ENCODE measurements at regions of chr14 and their contacts with region 1.

Region 1: DNA sequence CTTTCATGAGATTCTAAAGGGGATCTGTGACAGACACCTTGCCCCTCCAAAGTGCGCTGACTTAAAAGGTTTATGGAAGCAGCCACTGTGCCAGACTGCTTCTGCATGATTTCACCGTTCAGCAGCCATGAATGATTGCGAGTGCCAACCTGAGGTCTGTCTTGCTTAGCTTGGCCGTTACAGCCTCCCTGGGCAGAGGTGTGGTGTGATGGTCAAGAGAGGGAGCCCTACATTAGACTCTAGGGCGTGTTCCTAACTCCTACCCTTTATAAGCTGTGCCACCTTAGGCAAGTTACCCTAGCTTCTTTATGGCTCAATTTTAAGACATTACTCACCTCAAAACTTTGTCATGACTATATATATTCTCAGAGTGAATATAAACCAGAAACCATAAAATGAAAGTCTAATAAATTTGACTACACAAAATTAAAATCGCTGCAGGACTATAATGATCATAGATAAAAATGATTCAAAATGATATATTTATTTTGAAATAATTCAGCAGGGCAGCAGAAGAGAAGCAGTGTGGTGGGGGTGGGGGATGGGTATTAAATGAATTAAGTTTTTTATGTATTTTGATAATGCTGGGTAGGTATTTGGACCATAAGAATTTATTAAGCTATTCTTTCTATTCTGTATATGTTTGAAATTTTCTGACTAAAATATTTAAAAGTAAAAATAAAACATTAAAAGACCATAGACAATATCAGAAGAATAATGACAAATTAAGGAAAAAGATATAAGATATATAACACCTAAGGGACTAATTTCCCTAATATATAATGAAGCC is 47.7 kb upstream of the MBIP start:
- DNase-seq: peak; percentile 31
- ATAC-seq: peak; percentile 95
- H3K4me3 ChIP-seq: no peak overlapping the region
- H3K27ac ChIP-seq: no peak overlapping the region
- H3K4me1 ChIP-seq: 0 out of 2 replicates have a peak, but pooled peaks cover 4% of the 10 kb centered on the region
- H3K27me3 ChIP-seq: peaks cover 46% of the 10 kb centered on the region
- CTCF ChIP-seq: no peak

Region 2: GRCh38 chr14:36198378-36198777 is 169.8 kb before region 1 on chr14:
- CTCF ChIA-PET with region 1: no interaction called
- POLR2A ChIA-PET with region 1: interaction called, 13 read pairs
- intact Hi-C with region 1: no loop called
- DNase-seq: no peak
- ATAC-seq: no peak
- H3K4me3 ChIP-seq: no peak overlapping the region
- H3K27ac ChIP-seq: no peak overlapping the region
- H3K4me1 ChIP-seq: no peaks in the 10 kb centered on the region
- H3K27me3 ChIP-seq: peaks cover 69% of the 10 kb centered on the region
- CTCF ChIP-seq: no peak

Region 3: DNA sequence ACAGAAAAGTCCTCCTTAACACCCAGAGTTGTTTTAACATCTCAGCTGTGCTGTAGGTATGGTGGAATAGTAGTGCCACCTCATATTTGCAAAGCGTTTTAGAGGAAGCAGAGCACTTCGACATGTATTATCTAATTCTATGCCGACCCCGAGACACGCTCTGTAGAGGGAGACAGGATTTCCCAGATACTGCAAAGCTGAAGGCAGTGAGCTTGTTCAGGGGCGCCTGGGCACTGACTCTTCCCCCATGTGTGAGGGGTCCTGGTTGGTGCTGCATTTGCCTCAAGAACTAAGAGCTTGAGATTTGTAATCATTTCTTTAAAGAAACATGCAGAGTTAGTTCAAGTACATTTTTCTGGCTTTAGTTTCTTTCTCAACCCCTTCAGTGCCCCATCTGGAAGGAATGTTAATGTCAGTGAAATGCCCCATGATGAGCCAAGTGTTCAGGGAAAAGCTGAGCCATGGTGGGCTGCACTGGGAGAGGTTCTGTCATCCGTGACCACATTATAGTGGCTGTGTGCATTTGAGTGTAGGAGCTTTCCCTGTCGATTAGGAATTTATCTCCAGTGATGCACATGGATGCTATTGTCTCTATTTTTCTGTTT is 114.1 kb before region 1 on chr14:
- CTCF ChIA-PET with region 1: no interaction called
- POLR2A ChIA-PET with region 1: no interaction called
- intact Hi-C with region 1: no loop called
- DNase-seq: peak; percentile 25
- ATAC-seq: 0 out of 2 replicates have a peak, but pooled peaks have one; percentile 27
- H3K4me3 ChIP-seq: no peak overlapping the region
- H3K27ac ChIP-seq: no peak overlapping the region
- H3K4me1 ChIP-seq: no peaks in the 10 kb centered on the region
- H3K27me3 ChIP-seq: peaks cover 64% of the 10 kb centered on the region
- CTCF ChIP-seq: peak; percentile 40